ENCODE measurements at regions of chr7 and their contacts with region 1.

Region 1: DNA sequence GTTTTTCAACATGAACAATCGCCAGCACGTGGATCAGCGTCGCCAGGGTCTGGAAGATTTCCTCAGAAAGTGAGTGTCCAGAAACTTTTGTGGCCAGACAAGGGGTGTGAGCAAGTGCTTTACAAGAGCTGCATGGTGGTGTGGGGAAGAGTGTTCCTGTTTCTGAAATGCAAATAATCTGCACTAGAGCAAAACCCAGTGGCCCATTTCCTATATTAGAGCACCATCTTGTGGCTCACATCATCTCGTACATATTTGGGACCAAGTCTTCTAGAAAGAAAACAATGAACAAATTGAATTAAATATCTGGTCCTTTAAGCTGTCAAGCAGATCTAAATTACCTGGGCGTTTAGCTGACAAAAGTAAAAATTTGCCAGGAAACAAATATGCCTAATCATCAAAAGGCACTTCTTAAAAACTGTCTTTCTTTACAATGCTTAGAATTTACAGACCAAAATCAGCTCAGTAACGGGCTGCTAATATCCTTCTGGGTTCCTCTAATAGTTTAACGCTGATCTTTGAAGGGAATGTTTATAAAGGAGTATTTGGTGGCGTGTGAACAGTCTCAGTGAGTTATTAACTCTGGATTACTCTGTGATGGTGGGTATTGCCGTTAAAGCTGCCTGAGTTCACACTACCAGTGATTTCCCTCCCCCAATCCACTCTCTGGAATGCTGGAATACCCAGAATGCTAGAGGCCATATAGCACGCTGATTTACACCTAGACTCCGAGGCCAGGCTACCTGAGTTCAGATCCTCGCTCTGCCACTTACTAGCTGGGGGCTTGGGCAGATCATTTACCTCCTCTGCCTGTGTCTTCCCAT is 73.6 kb downstream of the SNX10 start:
- DNase-seq: peak in 7 of 9 donors; percentile 51 to 77 (median 69)
- ATAC-seq: peak; percentile 88
- H3K4me3 ChIP-seq: no peak overlapping the region
- H3K4me3 Mint-ChIP-seq: no peak overlapping the region
- H3K27ac ChIP-seq: no peak overlapping the region
- H3K27ac Mint-ChIP-seq: peak overlapping the region in 1 of 9 donors; percentile 28
- H3K4me1 ChIP-seq: peaks cover 0 to 8% of the 10 kb centered on the region in 2 donors
- H3K4me1 Mint-ChIP-seq: peaks cover 3 to 16% (median 8%) of the 10 kb centered on the region in 7 donors
- H3K27me3 ChIP-seq: no peaks in the 10 kb centered on the region
- H3K27me3 Mint-ChIP-seq: peaks cover 0 to 4% (median 0%) of the 10 kb centered on the region in 5 donors

Region 2: DNA sequence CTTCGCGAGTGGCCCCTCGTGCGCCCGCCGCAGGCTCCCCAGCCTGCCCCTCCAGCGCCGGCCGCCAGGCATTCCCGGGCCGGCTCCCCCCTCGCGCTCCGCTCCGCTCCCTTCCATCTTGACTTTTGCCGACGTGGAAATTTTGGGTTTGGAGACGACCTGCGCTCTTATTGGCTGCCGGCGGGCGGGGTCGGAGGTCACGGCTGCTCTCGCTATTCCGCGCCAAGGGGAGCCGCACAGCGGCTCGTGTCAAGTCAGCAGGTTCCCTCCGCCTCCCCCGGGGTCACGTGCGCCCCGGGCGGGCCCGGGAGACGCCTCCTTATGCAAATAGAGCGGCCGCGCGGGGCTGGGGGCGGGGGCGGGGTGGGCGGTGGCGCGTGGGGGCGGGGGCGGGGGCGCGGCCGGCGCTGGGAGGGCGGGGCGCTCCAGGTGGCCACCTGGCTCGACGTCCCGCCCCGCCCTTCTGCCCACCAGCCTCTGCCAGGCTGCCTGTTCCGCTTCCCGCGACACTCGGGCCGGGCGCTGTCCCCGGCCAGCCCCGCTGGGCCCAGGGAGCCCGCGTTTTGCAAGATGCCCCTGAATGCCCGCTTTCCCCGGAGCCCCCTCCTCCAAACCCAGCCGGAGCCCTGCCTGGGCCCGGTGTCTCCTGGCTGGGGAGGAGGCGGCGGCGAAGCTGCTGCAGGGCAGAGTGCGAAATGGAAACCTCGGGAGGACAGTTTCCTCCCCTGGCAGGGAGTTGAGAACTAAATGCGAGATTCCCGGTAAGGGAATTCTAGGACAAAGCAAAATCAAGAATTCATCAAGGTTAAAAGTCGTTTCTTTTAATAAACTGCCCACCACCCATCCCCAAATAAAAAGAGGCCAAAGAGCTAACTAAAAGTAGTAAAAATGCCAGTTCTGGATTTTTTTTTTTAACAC is 414.0 kb before region 1 on chr7:
- CTCF ChIA-PET with region 1: no interaction called
- POLR2A ChIA-PET with region 1: no interaction called
- intact Hi-C with region 1: loop called (anchors 2 to 5 kb)
- DNase-seq: peak; percentile 70 to 94 (median 87)
- ATAC-seq: peak; percentile 99
- H3K4me3 ChIP-seq: peak overlapping the region; percentile 61
- H3K4me3 Mint-ChIP-seq: peak overlapping the region; percentile 87 to 94 (median 92)
- H3K27ac ChIP-seq: peak overlapping the region; percentile 52
- H3K27ac Mint-ChIP-seq: peak overlapping the region in 7 of 9 donors; percentile 45 to 87 (median 81)
- H3K4me1 ChIP-seq: peaks cover 7 to 14% of the 10 kb centered on the region in 2 donors
- H3K4me1 Mint-ChIP-seq: peaks cover 16 to 31% (median 20%) of the 10 kb centered on the region in 7 donors
- H3K27me3 ChIP-seq: no peaks in the 10 kb centered on the region
- H3K27me3 Mint-ChIP-seq: peaks cover 0 to 22% (median 5%) of the 10 kb centered on the region in 5 donors

Region 3: DNA sequence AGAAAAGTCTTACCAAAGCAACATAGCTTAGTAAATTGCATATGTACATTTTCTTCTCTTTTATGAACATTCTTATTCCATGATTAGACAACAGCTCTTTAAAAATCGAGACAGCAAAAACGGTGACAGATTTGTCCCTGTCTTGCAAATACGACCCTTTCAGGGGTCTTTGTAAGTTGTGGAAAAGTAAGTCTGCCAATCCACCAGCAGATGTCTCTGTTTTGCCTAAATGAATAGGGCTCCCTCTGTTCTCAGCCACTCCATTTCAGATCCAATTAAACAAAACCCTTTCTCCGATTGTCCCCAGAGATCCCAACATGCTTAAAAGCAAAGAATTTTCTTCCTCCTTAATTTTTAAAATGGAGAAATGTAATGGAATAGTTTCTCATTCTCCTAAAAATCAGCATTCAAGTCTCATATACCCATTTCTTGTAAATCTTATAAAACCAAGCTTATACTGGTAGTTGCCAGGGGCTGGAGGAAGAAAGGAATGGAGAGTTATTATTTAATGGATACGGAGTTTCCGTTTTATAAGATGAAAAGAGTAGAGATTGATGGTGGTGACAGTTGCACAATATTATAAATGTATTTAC is 274.3 kb before region 1 on chr7:
- CTCF ChIA-PET with region 1: interaction called, 101 read pairs
- POLR2A ChIA-PET with region 1: interaction called, 11 read pairs
- intact Hi-C with region 1: loop called (anchors 1 kb)
- DNase-seq: peak in 7 of 9 donors; percentile 19 to 63 (median 53)
- ATAC-seq: peak; percentile 64
- H3K4me3 ChIP-seq: no peak overlapping the region
- H3K4me3 Mint-ChIP-seq: peak overlapping the region in 9 of 10 donors; percentile 4 to 50 (median 30)
- H3K27ac ChIP-seq: no peak overlapping the region
- H3K27ac Mint-ChIP-seq: peak overlapping the region in 6 of 9 donors; percentile 1 to 68 (median 2)
- H3K4me1 ChIP-seq: peaks cover 0 to 20% of the 10 kb centered on the region in 2 donors
- H3K4me1 Mint-ChIP-seq: peaks cover 11 to 54% (median 22%) of the 10 kb centered on the region in 7 donors
- H3K27me3 ChIP-seq: no peaks in the 10 kb centered on the region
- H3K27me3 Mint-ChIP-seq: no peaks in the 10 kb centered on the region

Region 4: DNA sequence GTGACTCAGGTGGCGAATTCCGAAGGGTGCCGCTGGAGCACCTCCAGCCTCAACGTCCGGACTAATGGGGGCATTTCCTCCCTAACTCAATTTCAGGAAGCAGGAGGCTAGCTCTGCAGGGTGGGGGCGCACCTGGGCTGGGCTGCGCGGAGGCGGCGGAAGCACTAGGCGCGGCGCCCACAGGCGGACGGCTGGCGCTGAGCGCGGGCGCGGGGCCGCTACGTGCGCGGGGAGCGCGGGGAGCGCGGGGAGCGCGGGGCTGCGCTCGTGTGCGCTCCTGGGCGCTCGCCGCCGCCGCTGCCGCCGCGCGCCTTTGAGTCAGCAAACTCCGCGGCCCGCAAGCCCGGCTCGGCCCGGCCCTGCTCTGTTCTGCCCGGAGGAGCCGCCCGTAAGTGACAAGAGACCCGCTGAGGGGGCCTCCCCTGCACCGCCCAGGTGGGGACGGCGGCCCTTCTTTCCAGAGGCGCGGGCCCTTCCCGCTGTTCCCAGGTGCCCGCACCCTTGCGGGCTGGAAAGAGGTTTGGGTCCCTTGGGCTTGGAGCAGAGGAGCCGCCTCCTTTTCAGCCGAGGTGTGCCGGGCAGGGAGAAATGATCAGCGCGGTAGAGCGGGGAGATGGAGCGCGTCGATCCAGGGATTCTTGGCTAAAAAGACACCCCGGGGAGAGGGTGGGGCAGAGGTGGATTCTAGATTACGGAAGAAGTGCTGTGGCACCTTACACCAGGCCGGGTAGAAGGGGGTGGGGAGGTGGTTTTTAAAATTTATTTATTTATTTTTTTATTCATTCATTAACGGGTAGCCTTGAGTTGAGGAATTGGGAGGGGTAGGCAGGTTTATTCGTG is 73.4 kb before region 1 on chr7 and contains the start of gene SNX10:
- CTCF ChIA-PET with region 1: interaction called, 3 read pairs
- POLR2A ChIA-PET with region 1: interaction called, 3 read pairs
- intact Hi-C with region 1: loop called (anchors 1 kb)
- DNase-seq: peak; percentile 52 to 74 (median 72)
- ATAC-seq: peak; percentile 90
- H3K4me3 ChIP-seq: peak within 1 kb of the TSS; percentile 88
- H3K4me3 Mint-ChIP-seq: peak within 1 kb of the TSS; percentile 78 to 94 (median 91)
- H3K27ac ChIP-seq: peak within 1 kb of the TSS; percentile 58
- H3K27ac Mint-ChIP-seq: peak within 1 kb of the TSS; percentile 45 to 91 (median 82)
- H3K4me1 ChIP-seq: peaks cover 25 to 30% of the 10 kb centered on the region in 2 donors
- H3K4me1 Mint-ChIP-seq: peaks cover 22 to 41% (median 35%) of the 10 kb centered on the region in 7 donors
- H3K27me3 ChIP-seq: no peaks in the 10 kb centered on the region
- H3K27me3 Mint-ChIP-seq: peaks cover 0 to 13% (median 0%) of the 10 kb centered on the region in 5 donors
- total RNA-seq, gene SNX10: 5.0 to 37.0 (median 6.3) TPM

Region 5: GRCh38 chr7:26500749-26501352 is 135.6 kb after region 1 on chr7:
- CTCF ChIA-PET with region 1: interaction called, 4 read pairs
- POLR2A ChIA-PET with region 1: no interaction called
- intact Hi-C with region 1: loop called in 1 of 2 experiments (anchors 1 kb)
- DNase-seq: peak in 3 of 9 donors; percentile 7 to 18 (median 9)
- ATAC-seq: peak; percentile 46
- H3K4me3 ChIP-seq: no peak overlapping the region
- H3K4me3 Mint-ChIP-seq: no peak overlapping the region
- H3K27ac ChIP-seq: no peak overlapping the region
- H3K27ac Mint-ChIP-seq: no peak overlapping the region
- H3K4me1 ChIP-seq: no peaks in the 10 kb centered on the region
- H3K4me1 Mint-ChIP-seq: peaks cover 0 to 2% (median 0%) of the 10 kb centered on the region in 7 donors
- H3K27me3 ChIP-seq: no peaks in the 10 kb centered on the region
- H3K27me3 Mint-ChIP-seq: peaks cover 0 to 30% (median 9%) of the 10 kb centered on the region in 5 donors

Region 6: GRCh38 chr7:27160546-27161213 is 795.4 kb after region 1 on chr7:
- CTCF ChIA-PET with region 1: interaction called, 10 read pairs
- POLR2A ChIA-PET with region 1: no interaction called
- intact Hi-C with region 1: loop called (anchors 1 to 2 kb)
- DNase-seq: peak; percentile 69 to 89 (median 84)
- ATAC-seq: peak; percentile 91
- H3K4me3 ChIP-seq: peak overlapping the region; percentile 81
- H3K4me3 Mint-ChIP-seq: peak overlapping the region; percentile 71 to 88 (median 80)
- H3K27ac ChIP-seq: no peak overlapping the region
- H3K27ac Mint-ChIP-seq: peak overlapping the region in 1 of 9 donors; percentile 33
- H3K4me1 ChIP-seq: peaks cover 24 to 38% of the 10 kb centered on the region in 2 donors
- H3K4me1 Mint-ChIP-seq: peaks cover 15 to 52% (median 34%) of the 10 kb centered on the region in 7 donors
- H3K27me3 ChIP-seq: peaks cover 27 to 61% of the 10 kb centered on the region in 2 donors
- H3K27me3 Mint-ChIP-seq: peaks cover 62 to 89% (median 77%) of the 10 kb centered on the region in 5 donors